ENCODE measurements at regions of chr7 and their contacts with region 1.

Region 1: GRCh38 chr7:134916171-134916883 is 70.0 kb upstream of the AGBL3 start:
- DNase-seq: no peak
- ATAC-seq: no peak
- H3K4me3 ChIP-seq: no peak overlapping the region
- H3K27ac ChIP-seq: no peak overlapping the region; a peak in 1 of 6 replicates
- H3K4me1 ChIP-seq: peaks cover 37% of the 10 kb centered on the region
- CTCF ChIP-seq: no peak
- EP300 ChIP-seq: no peak
- POLR2A ChIP-seq: no peak
- RAD21 ChIP-seq: no peak

Region 2: GRCh38 chr7:134792968-134793367 is 123.4 kb before region 1 on chr7:
- CTCF ChIA-PET with region 1: no interaction called
- POLR2A ChIA-PET with region 1: no interaction called
- DNase-seq: no peak
- ATAC-seq: peak in 1 of 2 experiments; percentile 35; a peak in 2 of 6 replicates
- H3K4me3 ChIP-seq: no peak overlapping the region
- H3K27ac ChIP-seq: no peak overlapping the region
- H3K4me1 ChIP-seq: no peaks in the 10 kb centered on the region
- CTCF ChIP-seq: no peak
- EP300 ChIP-seq: no peak
- POLR2A ChIP-seq: no peak
- RAD21 ChIP-seq: no peak

Region 3: GRCh38 chr7:134903073-134903790 is 13.1 kb before region 1 on chr7:
- CTCF ChIA-PET with region 1: interaction called, 10 read pairs
- POLR2A ChIA-PET with region 1: no interaction called
- DNase-seq: no peak
- ATAC-seq: no peak
- H3K4me3 ChIP-seq: no peak overlapping the region
- H3K27ac ChIP-seq: no peak overlapping the region
- H3K4me1 ChIP-seq: peaks cover 51% of the 10 kb centered on the region
- CTCF ChIP-seq: no peak
- EP300 ChIP-seq: no peak
- POLR2A ChIP-seq: no peak
- RAD21 ChIP-seq: no peak

Region 4: DNA sequence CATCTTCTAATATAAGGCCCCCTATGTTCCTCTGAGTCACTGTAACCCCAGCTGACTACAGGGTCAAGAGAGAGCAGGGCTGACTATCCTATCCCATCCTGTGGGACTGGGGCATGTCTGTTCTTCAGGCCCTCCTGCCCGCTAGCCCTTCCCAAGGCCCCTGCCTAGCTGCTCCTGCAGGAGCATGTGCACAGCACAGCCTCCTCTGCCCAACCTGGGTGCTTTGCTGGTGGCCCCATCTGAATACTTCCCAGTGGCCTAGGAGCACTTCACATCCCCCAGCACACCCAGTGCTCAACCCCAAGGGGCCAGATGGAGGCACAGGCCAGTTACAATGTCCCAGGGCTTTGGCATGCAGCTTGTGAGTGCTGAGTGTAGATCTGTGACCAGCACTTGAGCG is 107.3 kb after region 1 on chr7:
- CTCF ChIA-PET with region 1: no interaction called
- POLR2A ChIA-PET with region 1: no interaction called
- DNase-seq: no peak
- ATAC-seq: no peak
- H3K4me3 ChIP-seq: no peak overlapping the region
- H3K27ac ChIP-seq: no peak overlapping the region
- H3K4me1 ChIP-seq: no peaks in the 10 kb centered on the region
- CTCF ChIP-seq: no peak
- EP300 ChIP-seq: no peak
- POLR2A ChIP-seq: no peak
- RAD21 ChIP-seq: no peak

Region 5: GRCh38 chr7:135251496-135252391 is 335.4 kb after region 1 on chr7:
- CTCF ChIA-PET with region 1: no interaction called
- POLR2A ChIA-PET with region 1: no interaction called
- DNase-seq: no peak
- ATAC-seq: no peak
- H3K4me3 ChIP-seq: no peak overlapping the region
- H3K27ac ChIP-seq: no peak overlapping the region
- H3K4me1 ChIP-seq: peaks cover 16% of the 10 kb centered on the region
- CTCF ChIP-seq: no peak
- EP300 ChIP-seq: no peak
- POLR2A ChIP-seq: no peak
- RAD21 ChIP-seq: no peak

Region 6: GRCh38 chr7:135335628-135336139 is 419.4 kb after region 1 on chr7:
- CTCF ChIA-PET with region 1: no interaction called
- POLR2A ChIA-PET with region 1: no interaction called
- DNase-seq: peak; percentile 69 to 81
- ATAC-seq: peak; percentile 92 to 97
- H3K4me3 ChIP-seq: no peak overlapping the region
- H3K27ac ChIP-seq: peak overlapping the region; percentile 28 to 43; a peak in 2 of 6 replicates
- H3K4me1 ChIP-seq: peaks cover 8% of the 10 kb centered on the region; the same call in 1 of the 3 replicates
- CTCF ChIP-seq: peak; percentile 69
- EP300 ChIP-seq: no peak
- POLR2A ChIP-seq: no peak
- RAD21 ChIP-seq: peak; percentile 93 to 94

Measured in A549 (cell line).